Left ventricle myocardium superior (tissue), 1 donor: ENCODE measurements at regions of chr3 and their contacts with region 1.

Region 1: GRCh38 chr3:181709537-181710279 is 2.0 kb upstream of the SOX2 start:
- DNase-seq: peak; percentile 79
- ATAC-seq: no peak

Region 2: DNA sequence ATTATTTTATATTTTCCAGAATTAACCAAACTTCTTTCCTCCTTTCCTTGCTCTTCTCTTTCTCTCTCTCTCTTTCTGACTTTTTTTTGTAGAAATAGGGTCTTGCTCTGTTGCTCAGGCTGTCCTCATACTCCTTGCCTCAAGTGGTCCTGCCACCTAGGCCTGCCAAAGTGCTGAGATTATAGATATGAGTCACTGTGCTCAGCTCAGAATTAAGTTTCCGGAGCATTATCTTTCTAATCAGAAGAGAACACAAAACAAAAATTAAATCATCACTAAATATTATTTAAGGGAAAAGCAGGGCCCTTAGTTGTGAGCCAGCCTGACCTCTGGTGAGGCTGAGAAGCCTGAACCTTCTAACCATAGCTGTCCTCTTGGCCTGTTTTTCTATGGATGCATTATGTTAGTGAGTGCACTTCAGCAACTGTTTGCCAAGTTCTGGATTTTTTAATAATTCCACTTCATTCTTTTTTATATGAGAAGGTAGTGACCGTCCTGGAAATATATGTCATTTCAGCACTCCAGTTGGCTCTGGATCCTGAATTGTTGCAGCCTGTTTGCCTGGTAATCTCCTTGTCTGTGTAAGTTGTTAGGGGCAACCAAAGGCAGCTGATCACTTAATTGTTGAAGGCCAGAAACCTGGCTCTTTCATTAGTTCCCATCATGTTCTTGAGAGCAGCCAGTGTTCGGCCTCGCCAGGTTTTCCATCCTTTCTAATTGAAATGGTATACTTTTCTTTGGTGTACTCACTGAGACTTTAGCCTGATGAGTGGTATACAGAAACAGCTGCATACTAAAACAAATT is 170.4 kb after region 1 on chr3:
- intact Hi-C with region 1: no loop called
- DNase-seq: no peak
- ATAC-seq: no peak

Region 3: GRCh38 chr3:182258538-182259177 is 549.0 kb after region 1 on chr3:
- intact Hi-C with region 1: loop called (anchors 10 kb)
- DNase-seq: no peak
- ATAC-seq: peak; percentile 53